Dendritic cell treated with granulocyte-macrophage colony-stimulating factor and Interleukin-4, amounts not matched to agents 40 ng/mL and 50 ng/mL, for 4 days (primary cell): ENCODE measurements at regions of chr12 and their contacts with region 1.

Region 1: GRCh38 chr12:120317224-120318105 is 10.1 kb downstream of the PLA2G1B start:
- H3K4me3 Mint-ChIP-seq: peak overlapping the region; percentile 87
- H3K27ac Mint-ChIP-seq: peak overlapping the region; percentile 88
- H3K4me1 Mint-ChIP-seq: peaks cover 15% of the 10 kb centered on the region
- H3K27me3 Mint-ChIP-seq: peaks cover 2% of the 10 kb centered on the region

Region 2: GRCh38 chr12:120167529-120168095 is 149.9 kb before region 1 on chr12:
- intact Hi-C with region 1: no loop called
- H3K4me3 Mint-ChIP-seq: no peak overlapping the region
- H3K27ac Mint-ChIP-seq: no peak overlapping the region
- H3K4me1 Mint-ChIP-seq: no peaks in the 10 kb centered on the region
- H3K27me3 Mint-ChIP-seq: no peaks in the 10 kb centered on the region

Region 3: DNA sequence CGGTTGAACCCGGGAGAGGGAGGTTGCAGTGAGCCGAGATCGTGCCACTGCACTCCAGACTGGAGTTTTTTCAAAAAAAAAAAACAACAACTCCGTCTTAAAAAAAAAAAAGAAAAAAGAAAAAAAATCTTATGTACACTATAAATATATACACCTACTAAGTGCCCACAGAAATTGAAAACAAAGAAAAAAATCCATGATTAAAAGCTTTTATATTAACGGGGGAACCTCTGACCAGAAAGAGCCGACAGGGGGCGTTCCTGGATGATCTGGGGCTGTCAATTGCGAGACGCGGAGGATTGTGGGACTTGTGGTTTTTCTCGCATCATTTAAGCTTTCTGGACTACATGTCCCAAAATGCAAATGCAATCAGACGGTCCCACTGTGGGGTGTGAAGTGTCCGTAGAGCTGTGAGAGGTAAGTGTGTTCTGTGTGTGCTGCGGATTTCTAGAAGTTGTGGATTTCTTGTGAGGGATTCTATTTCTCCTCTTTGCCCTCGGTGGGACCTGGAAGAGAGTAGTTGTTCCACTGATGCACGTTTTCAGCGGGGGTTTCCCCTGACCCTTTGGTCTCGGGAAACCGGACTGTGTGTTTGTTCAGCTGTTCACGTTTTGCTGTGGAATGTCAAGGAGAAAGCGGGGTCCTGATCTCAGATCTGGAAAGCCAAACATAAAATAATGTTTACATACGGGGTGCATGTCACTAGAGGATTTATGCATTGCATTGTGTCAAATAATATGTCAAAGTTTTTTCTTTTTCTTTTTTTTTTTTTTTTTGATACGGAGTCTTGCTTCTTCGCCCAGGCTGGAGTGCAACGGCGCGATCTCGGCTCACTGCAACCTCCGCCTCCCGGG is 15.3 kb before region 1 on chr12 and contains the start of gene SIRT4:
- intact Hi-C with region 1: loop called (anchors 1 kb)
- H3K4me3 Mint-ChIP-seq: peak within 1 kb of the TSS; percentile 84
- H3K27ac Mint-ChIP-seq: peak within 1 kb of the TSS; percentile 86
- H3K4me1 Mint-ChIP-seq: peaks cover 5% of the 10 kb centered on the region
- H3K27me3 Mint-ChIP-seq: no peaks in the 10 kb centered on the region

Region 4: DNA sequence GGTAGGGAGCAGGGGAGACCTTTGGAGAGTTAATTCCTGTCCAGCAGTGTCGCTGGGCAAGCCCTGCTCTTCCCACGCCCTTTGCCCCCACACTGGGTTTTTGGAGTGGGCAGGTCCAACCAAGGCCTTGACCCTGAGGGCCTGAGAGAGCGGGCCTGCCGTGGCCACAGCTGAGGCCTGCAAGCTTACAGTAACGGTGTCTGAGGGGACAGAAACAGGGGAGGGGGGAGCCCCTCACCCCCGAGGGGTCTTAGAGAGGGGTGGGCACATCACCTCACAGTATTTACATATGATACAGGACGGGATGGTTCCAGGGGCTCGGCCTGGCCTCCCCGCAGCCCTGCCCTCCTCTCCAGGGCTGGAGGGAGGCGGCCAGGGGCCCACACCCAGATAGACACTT is 24.7 kb after region 1 on chr12:
- intact Hi-C with region 1: no loop called
- H3K4me3 Mint-ChIP-seq: no peak overlapping the region
- H3K27ac Mint-ChIP-seq: no peak overlapping the region
- H3K4me1 Mint-ChIP-seq: no peaks in the 10 kb centered on the region
- H3K27me3 Mint-ChIP-seq: peaks cover 10% of the 10 kb centered on the region

Region 5: DNA sequence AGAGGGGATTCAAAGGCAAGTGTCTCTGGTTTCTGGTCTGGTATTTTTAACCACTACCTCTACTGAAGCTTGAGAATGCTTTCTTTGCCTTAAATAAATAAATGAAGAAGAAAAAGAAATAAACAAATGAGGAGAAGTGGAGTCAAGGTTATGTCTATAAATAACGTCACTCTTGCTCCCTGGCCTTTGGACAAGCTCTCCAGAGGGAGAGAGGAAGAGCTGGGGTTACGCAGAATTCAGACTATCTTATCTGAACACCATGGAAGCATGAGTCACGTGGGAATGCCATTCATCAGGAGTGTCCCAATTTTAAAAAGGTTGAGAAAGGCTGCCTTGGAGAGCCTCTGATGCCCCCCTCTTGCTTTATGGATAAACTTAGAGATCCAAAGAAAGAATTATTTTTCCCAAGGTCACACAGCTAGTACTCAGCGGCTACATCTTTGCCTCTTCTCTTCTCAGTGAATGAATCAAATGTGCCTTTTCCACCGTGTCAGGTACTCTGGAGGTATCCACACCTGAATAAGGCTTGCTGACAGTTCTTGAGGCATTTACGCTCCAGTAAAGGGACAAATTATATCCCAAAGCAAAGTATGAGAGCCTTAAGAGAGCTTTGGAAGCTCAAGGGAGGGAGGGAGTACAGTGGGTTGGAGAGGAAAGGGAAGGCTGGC is 64.4 kb after region 1 on chr12:
- intact Hi-C with region 1: no loop called
- H3K4me3 Mint-ChIP-seq: no peak overlapping the region
- H3K27ac Mint-ChIP-seq: no peak overlapping the region
- H3K4me1 Mint-ChIP-seq: peaks cover 4% of the 10 kb centered on the region
- H3K27me3 Mint-ChIP-seq: peaks cover 36% of the 10 kb centered on the region

Region 6: DNA sequence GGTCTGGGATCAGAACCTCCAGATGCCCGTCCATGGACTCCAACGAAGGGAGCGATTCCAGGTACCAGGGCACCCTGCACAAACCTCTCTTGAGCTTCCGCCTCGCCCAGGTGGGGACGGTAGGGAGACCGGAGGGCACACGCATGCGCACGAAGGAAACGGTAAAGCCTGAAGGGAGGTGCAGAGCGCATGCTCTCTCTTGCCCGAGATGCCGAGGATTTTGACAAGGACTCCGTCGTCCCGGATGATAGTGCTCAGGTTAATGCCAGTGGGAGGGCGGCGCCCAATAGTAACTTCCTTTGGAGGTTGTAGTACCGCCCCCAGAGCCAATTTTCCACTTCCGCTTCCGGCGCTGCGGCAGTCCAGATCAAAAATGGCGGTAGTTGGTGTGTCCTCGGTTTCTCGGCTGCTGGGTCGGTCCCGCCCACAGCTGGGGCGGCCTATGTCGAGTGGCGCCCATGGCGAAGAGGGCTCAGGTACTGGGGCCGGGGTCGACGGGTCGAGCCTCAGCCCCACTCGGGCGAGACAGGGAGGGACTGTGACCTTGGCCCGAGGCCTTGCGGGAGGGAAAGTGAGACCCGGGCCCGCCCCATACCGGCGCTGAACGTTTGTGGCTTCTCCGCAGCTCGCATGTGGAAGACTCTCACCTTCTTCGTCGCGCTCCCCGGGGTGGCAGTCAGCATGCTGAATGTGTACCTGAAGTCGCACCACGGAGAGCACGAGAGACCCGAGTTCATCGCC is 120.5 kb after region 1 on chr12 and contains the start of gene COX6A1:
- intact Hi-C with region 1: loop called (anchors 10 kb)
- H3K4me3 Mint-ChIP-seq: peak within 1 kb of the TSS; percentile 98
- H3K27ac Mint-ChIP-seq: peak within 1 kb of the TSS; percentile 96
- H3K4me1 Mint-ChIP-seq: peaks cover 12% of the 10 kb centered on the region
- H3K27me3 Mint-ChIP-seq: peaks cover under 1% of the 10 kb centered on the region